ENCODE measurements at regions of chr2 and their contacts with region 1.

Region 1: GRCh38 chr2:118309257-118309945 is 221.1 kb downstream of the INSIG2 start:
- DNase-seq: no peak
- H3K4me3 Mint-ChIP-seq: peak overlapping the region; percentile 68
- H3K27ac Mint-ChIP-seq: no peak overlapping the region
- H3K4me1 Mint-ChIP-seq: no peaks in the 10 kb centered on the region
- H3K27me3 Mint-ChIP-seq: no peaks in the 10 kb centered on the region
- CTCF ChIP-seq: no peak

Region 2: GRCh38 chr2:118340103-118340502 is 30.7 kb after region 1 on chr2:
- CTCF ChIA-PET with region 1: interaction called, 10 read pairs
- intact Hi-C with region 1: no loop called
- DNase-seq: no peak
- H3K4me3 Mint-ChIP-seq: no peak overlapping the region
- H3K27ac Mint-ChIP-seq: no peak overlapping the region
- H3K4me1 Mint-ChIP-seq: no peaks in the 10 kb centered on the region
- H3K27me3 Mint-ChIP-seq: no peaks in the 10 kb centered on the region
- CTCF ChIP-seq: no peak

Measured in Calu3 (cell line).